Dendritic cell treated with granulocyte-macrophage colony-stimulating factor and Interleukin-4, amounts not matched to agents 40 ng/mL and 50 ng/mL, for 4 days (primary cell): ENCODE measurements at regions of chr1 and their contacts with region 1.

Region 1: GRCh38 chr1:37177247-37177864 is 143.0 kb upstream of the GRIK3 start:
- H3K4me3 Mint-ChIP-seq: no peak overlapping the region
- H3K27ac Mint-ChIP-seq: no peak overlapping the region
- H3K4me1 Mint-ChIP-seq: no peaks in the 10 kb centered on the region
- H3K27me3 Mint-ChIP-seq: peaks cover 6% of the 10 kb centered on the region

Region 2: GRCh38 chr1:36516372-36517325 is 660.7 kb before region 1 on chr1:
- intact Hi-C with region 1: loop called (anchors 5 kb)
- H3K4me3 Mint-ChIP-seq: no peak overlapping the region
- H3K27ac Mint-ChIP-seq: peak overlapping the region; percentile 26
- H3K4me1 Mint-ChIP-seq: peaks cover 45% of the 10 kb centered on the region
- H3K27me3 Mint-ChIP-seq: no peaks in the 10 kb centered on the region

Region 3: DNA sequence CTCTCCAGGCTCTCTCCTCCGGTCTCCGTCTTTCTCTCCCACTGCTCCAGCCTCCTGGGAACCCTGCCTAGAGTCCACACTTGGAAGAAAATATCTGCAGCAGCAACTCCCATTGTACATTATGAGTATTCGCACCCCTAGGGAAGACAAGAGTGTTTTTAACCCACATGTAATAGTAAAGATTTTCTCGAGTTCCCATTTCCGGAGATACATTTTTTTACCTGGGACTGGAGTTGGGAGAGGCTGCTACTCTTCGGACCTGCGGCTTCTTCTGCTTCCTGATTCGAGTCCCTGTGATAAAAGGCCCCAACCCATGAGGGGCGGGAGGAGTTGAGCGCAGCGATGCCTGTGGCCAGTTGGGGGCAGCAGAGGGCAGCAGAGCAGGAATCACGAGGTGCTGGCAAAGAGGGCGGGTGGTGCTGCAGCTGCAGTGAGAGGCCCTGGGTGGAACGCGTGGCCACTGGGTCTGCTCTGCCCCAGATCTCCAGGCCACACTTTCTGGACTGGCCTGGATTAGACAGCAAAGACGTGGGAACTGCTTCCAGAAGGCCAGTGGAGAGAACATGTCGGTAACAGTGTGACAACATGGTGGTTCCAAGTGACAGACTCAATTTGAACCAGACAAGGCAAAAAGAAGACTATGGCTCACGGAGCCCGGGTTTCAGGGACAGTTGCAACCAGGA is 473.7 kb before region 1 on chr1:
- intact Hi-C with region 1: loop called (anchors 5 kb)
- H3K4me3 Mint-ChIP-seq: no peak overlapping the region
- H3K27ac Mint-ChIP-seq: no peak overlapping the region
- H3K4me1 Mint-ChIP-seq: peaks cover 28% of the 10 kb centered on the region
- H3K27me3 Mint-ChIP-seq: peaks cover 35% of the 10 kb centered on the region